B cell (primary cell): ENCODE measurements at regions of chr12 and their contacts with region 1.

Region 1: DNA sequence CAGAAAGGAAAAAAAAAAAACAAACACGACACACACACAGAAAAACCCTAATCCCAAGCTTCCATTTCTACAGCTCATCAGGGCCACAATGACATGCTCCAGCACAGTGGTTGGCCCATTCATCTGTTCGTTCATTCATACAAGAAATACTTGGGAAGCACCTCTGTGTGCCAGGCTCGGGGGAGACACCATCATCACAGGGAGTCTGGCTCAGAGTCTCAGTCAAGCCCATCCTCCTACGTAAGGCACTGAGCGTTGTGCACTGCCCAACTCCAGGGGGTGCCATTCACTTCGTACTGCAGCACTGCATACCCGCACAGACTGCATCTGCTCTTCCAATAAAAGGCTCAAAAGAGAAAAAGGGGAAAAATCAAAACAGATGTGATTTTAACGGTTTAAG is 15.3 kb downstream of the VPS37B start:
- DNase-seq: peak; percentile 53
- ATAC-seq: peak; percentile 68
- H3K4me3 ChIP-seq: no peak overlapping the region
- H3K4me3 Mint-ChIP-seq: peak overlapping the region; percentile 45
- H3K27ac ChIP-seq: no peak overlapping the region
- H3K27ac Mint-ChIP-seq: peak overlapping the region; percentile 32
- H3K4me1 ChIP-seq: peaks cover 87 to 95% of the 10 kb centered on the region in 2 donors
- H3K4me1 Mint-ChIP-seq: peaks cover 88% of the 10 kb centered on the region
- H3K27me3 ChIP-seq: no peaks in the 10 kb centered on the region
- H3K27me3 Mint-ChIP-seq: no peaks in the 10 kb centered on the region
- CTCF ChIP-seq: peak; percentile 51

Region 2: DNA sequence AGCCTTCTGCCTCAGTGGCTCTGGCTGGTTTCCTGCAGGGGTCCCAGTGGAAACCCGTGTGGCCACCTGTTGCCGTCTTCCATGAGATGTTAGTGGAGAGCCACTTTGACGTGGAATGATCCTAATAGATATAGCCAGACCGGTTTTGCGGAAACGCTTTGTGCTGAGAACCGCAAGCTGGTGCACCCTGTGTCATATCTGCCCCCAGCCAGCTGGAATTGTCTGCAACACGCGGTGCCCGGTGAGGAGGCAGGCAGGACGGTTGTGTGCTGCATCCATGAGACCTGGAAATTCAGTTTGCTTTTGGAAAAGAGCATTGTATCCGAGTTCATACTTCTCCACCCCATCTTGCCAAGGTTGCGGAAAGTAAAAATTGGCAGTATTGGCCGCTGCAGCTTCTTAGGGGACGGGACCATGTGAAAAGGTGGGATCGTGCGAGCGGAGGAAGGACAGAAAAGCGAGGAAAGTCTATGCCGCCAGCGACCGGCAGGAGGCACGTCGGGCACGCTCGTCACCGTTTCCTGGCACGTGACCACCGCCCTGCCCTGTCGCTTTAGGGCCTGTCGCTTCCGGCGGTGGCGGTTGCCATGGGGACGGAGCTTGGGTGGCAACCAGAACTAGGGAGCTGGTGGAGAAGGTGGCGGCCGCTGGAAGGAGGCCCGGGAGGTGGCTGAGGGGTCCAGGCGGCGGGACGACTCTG is 962.5 kb before region 1 on chr12 and contains the start of gene CFAP251:
- CTCF ChIA-PET with region 1: no interaction called
- POLR2A ChIA-PET with region 1: no interaction called
- intact Hi-C with region 1: no loop called
- DNase-seq: peak; percentile 96
- ATAC-seq: peak; percentile 98
- H3K4me3 ChIP-seq: peak within 1 kb of the TSS in 4 of 5 experiments; percentile 28 to 64 (median 52)
- H3K4me3 Mint-ChIP-seq: peak within 1 kb of the TSS; percentile 92
- H3K27ac ChIP-seq: peak within 1 kb of the TSS in 1 of 2 donors; percentile 77
- H3K27ac Mint-ChIP-seq: peak within 1 kb of the TSS; percentile 80
- H3K4me1 ChIP-seq: peaks cover 8 to 11% of the 10 kb centered on the region in 2 donors
- H3K4me1 Mint-ChIP-seq: peaks cover 11% of the 10 kb centered on the region
- H3K27me3 ChIP-seq: no peaks in the 10 kb centered on the region
- H3K27me3 Mint-ChIP-seq: no peaks in the 10 kb centered on the region
- CTCF ChIP-seq: peak; percentile 86
- total RNA-seq, gene CFAP251: 1.4 and 1.6 TPM in 2 replicates

Region 3: GRCh38 chr12:122951979-122952892 is 71.6 kb after region 1 on chr12:
- CTCF ChIA-PET with region 1: interaction called, 86 read pairs
- POLR2A ChIA-PET with region 1: no interaction called
- intact Hi-C with region 1: no loop called
- DNase-seq: peak; percentile 84
- ATAC-seq: peak; percentile 99
- H3K4me3 ChIP-seq: no peak overlapping the region
- H3K4me3 Mint-ChIP-seq: no peak overlapping the region
- H3K27ac ChIP-seq: no peak overlapping the region
- H3K27ac Mint-ChIP-seq: peak overlapping the region; percentile 37
- H3K4me1 ChIP-seq: peaks cover 10 to 17% of the 10 kb centered on the region in 2 donors
- H3K4me1 Mint-ChIP-seq: peaks cover 21% of the 10 kb centered on the region
- H3K27me3 ChIP-seq: no peaks in the 10 kb centered on the region
- H3K27me3 Mint-ChIP-seq: no peaks in the 10 kb centered on the region
- CTCF ChIP-seq: peak; percentile 91

Region 4: DNA sequence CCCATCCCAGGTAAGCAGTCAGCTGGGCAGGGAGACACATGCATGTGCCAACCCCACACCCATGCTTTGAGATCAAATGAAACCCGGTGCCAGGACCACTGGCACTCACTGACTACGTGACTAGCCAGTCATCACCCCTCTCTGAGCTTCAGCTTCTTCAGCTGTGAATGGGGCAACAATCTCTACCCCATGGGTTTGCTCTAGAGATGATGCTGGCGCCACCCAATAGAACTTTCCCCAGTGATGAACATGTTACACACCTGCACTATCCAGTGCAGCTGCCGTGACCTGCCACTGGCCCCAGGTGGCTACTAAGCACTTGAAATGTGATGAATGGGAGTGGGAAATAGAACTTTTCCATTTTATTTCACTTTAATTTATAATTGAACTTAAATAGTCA is 200.0 kb after region 1 on chr12:
- CTCF ChIA-PET with region 1: no interaction called
- POLR2A ChIA-PET with region 1: no interaction called
- intact Hi-C with region 1: no loop called
- DNase-seq: no peak
- ATAC-seq: no peak
- H3K4me3 ChIP-seq: no peak overlapping the region
- H3K4me3 Mint-ChIP-seq: no peak overlapping the region
- H3K27ac ChIP-seq: no peak overlapping the region
- H3K27ac Mint-ChIP-seq: no peak overlapping the region
- H3K4me1 ChIP-seq: peaks cover 48 to 65% of the 10 kb centered on the region in 2 donors
- H3K4me1 Mint-ChIP-seq: peaks cover 56% of the 10 kb centered on the region
- H3K27me3 ChIP-seq: no peaks in the 10 kb centered on the region
- H3K27me3 Mint-ChIP-seq: no peaks in the 10 kb centered on the region
- CTCF ChIP-seq: no peak